ENCODE measurements at regions of chr16 and their contacts with region 1.

Region 1: GRCh38 chr16:71826533-71827017 is 17.9 kb upstream of the AP1G1 start:
- DNase-seq: no peak
- H3K4me3 ChIP-seq: no peak overlapping the region
- CTCF ChIP-seq: no peak

Region 2: DNA sequence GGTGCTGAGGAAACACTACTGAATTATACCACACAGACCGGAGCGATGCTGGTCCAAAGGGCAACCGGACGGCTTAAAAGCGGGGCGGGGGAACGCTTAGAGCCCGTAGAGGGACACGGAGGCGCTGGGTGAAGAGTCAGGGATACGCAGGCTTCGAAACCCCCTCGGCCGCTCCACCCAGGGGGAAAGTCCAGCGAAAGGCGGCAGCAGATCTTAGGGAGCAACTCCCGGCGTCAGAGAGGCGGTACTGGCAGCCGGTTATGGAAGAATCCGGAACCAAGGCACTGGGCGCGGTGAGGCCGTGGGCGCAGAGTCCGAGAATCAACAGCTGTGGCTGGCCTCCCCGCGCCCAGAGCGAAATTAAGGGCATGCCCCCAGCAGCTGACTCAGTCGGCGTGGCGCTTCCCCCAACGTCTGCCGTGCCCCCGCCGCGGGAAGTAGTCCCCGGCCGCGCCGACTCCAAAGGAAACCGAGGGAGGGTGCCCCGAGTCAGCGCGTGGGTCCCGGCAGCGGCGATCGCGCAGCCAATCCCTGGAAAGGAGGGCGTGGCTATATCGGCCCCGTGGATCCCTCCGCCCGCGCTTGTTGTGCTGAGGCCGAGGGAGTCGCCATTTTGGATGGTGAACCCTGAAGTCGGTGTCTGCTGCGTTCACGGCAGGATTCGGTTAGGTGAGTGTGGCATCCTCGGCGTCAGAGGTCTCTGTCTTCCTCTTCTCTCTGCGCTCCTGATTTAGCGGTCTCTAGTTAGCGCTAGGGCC is 68.5 kb after region 1 on chr16 and contains the start of gene IST1:
- in situ Hi-C with region 1: no loop called
- DNase-seq: peak; percentile 97
- H3K4me3 ChIP-seq: peak within 1 kb of the TSS; percentile 100
- CTCF ChIP-seq: no peak

Region 3: DNA sequence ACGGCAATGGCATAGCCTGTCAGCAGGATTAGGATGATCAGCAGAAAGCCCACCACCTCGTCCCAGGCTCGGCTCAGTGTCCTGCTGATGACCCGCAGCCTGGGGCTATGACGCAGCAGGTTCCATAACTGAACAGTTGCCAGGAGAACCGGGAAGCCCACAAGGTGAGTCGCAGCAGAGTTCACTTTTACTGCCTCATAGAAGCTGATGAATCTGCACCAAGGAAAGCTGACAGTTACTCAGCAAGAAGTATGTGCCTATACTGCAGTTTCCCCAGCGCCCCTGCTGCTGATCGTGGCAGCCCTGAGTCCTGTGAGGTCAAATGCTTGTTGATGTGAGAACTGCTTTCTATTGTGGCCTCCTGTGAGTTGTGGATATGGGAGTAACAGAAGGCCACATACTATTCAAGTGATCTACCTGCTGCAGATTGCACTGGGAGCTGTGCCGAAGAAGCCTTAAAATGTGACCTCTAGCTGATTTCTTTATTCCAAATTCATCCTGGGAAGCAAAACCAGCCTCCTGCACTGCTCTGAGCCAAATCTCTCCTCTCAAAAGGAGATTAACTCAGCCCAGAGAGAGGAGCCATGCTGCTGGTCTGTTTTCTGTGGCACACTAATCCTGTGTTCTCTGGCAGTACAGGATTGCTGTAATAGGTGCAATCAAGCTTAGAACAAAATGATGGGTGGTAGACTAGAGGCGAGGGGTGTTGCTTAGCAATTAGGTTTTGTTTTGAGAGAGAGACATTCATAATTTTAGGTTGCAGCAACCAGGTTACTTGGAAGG is 107.5 kb after region 1 on chr16:
- in situ Hi-C with region 1: loop called (anchors 5 kb)
- DNase-seq: peak; percentile 49
- H3K4me3 ChIP-seq: no peak overlapping the region
- CTCF ChIP-seq: no peak

Measured in astrocyte of the cerebellum (primary cell).